Gastrocnemius medialis (tissue), 4 donors: ENCODE measurements at regions of chr14 and their contacts with region 1.

Region 1: GRCh38 chr14:34227834-34228649 is 234.0 kb downstream of the SPTSSA start:
- DNase-seq: peak; percentile 25 to 49
- ATAC-seq: peak; percentile 78 to 94
- H3K4me3 ChIP-seq: peak overlapping the region in 2 of 4 donors; percentile 24
- H3K27ac ChIP-seq: no peak overlapping the region
- H3K4me1 ChIP-seq: peaks cover 11 to 16% of the 10 kb centered on the region in 2 donors
- H3K27me3 ChIP-seq: no peaks in the 10 kb centered on the region
- CTCF ChIP-seq: peak; percentile 66 to 87 (median 85)
- POLR2A ChIP-seq: no peak

Region 2: DNA sequence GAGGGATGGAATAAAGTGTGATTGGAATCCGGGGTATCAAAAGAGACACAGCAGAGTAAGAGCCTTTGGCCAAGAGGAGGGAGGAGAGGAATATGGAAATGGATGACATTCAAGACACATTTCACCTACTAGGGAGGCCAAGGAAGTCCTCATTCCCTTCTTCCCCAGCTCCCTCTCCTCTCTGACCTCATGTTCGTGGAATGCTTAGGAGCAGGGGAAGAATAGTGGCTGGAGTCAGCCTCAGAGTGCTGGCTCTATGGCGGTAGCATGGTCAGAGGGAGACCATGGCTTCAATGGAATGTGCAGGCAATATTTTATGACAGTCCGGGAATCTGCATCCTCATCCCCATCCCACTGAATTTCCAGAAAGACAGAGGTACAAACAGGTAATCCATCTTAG is 473.8 kb before region 1 on chr14:
- in situ Hi-C with region 1: no loop called
- intact Hi-C with region 1: no loop called
- DNase-seq: no peak
- ATAC-seq: no peak
- H3K4me3 ChIP-seq: no peak overlapping the region
- H3K27ac ChIP-seq: no peak overlapping the region
- H3K4me1 ChIP-seq: no peaks in the 10 kb centered on the region
- H3K27me3 ChIP-seq: no peaks in the 10 kb centered on the region
- CTCF ChIP-seq: no peak
- POLR2A ChIP-seq: no peak

Region 3: DNA sequence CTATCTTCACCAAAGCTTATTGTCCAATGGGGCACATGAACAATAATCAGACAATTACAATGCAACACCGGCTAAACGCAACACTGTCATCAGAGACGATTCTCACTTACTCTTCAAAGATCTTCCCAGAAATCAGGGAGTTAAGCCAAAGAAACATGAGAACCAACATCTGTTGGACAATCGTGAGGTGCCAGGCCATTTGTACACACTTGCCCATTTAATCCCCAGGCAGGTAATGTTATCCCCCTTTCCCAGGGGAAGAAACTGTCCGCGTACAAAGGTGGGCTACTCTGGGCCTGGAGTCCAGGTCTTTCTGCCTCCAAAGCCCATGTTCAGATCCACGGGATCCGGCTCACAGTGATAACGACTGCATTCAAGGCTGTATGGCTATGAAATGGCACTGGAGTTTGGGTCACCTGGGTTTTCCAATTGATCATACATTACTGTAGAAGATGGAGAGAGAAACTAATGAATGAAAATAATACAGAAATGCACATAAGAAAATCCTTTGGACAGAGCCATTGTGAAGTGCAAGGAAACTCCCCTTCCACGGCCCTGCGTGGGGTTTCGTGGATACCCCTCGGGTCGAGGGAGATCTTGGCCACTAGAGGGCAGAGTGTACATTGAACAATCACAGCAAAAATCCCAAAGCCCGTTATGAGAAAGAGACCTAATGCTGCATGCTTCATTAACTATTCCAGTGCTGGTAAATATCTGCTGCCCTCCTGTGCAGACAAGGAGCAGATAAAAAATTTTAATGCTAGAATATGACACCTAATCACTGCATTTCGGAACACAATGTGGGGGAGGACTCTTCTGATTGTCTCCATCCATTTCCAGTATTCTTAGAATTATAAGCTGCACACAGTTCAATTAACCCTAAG is 388.6 kb before region 1 on chr14:
- in situ Hi-C with region 1: loop called in 2 of 4 experiments (anchors 5 to 10 kb)
- intact Hi-C with region 1: loop called (anchors 1 kb)
- DNase-seq: peak; percentile 9 to 38
- ATAC-seq: peak; percentile 77 to 92
- H3K4me3 ChIP-seq: no peak overlapping the region
- H3K27ac ChIP-seq: no peak overlapping the region
- H3K4me1 ChIP-seq: peaks cover 3 to 6% of the 10 kb centered on the region in 2 donors
- H3K27me3 ChIP-seq: no peaks in the 10 kb centered on the region
- CTCF ChIP-seq: peak; percentile 74 to 85 (median 79)
- POLR2A ChIP-seq: no peak

Region 4: GRCh38 chr14:33859306-33859705 is 368.7 kb before region 1 on chr14:
- in situ Hi-C with region 1: loop called in 2 of 4 experiments (anchors 10 kb)
- intact Hi-C with region 1: no loop called
- DNase-seq: no peak
- ATAC-seq: no peak
- H3K4me3 ChIP-seq: no peak overlapping the region
- H3K27ac ChIP-seq: no peak overlapping the region
- H3K4me1 ChIP-seq: no peaks in the 10 kb centered on the region
- H3K27me3 ChIP-seq: no peaks in the 10 kb centered on the region
- CTCF ChIP-seq: no peak
- POLR2A ChIP-seq: no peak

Region 5: GRCh38 chr14:33938131-33938949 is 289.7 kb before region 1 on chr14:
- in situ Hi-C with region 1: no loop called
- intact Hi-C with region 1: loop called (anchors 10 kb)
- DNase-seq: peak; percentile 40 to 74
- ATAC-seq: peak; percentile 84 to 92
- H3K4me3 ChIP-seq: peak overlapping the region; percentile 35 to 43 (median 42)
- H3K27ac ChIP-seq: peak overlapping the region; percentile 65 to 76 (median 72)
- H3K4me1 ChIP-seq: peaks cover 25 to 27% of the 10 kb centered on the region in 2 donors
- H3K27me3 ChIP-seq: no peaks in the 10 kb centered on the region
- CTCF ChIP-seq: no peak
- POLR2A ChIP-seq: no peak

Region 6: GRCh38 chr14:33950320-33951182 is 277.5 kb before region 1 on chr14 and contains the start of gene EGLN3:
- in situ Hi-C with region 1: no loop called
- intact Hi-C with region 1: loop called (anchors 5 kb)
- DNase-seq: peak; percentile 78 to 86
- ATAC-seq: peak; percentile 91 to 92
- H3K4me3 ChIP-seq: peak within 1 kb of the TSS; percentile 81 to 91 (median 83)
- H3K27ac ChIP-seq: peak within 1 kb of the TSS; percentile 78 to 88 (median 82)
- H3K4me1 ChIP-seq: peaks cover 11 to 14% of the 10 kb centered on the region in 2 donors
- H3K27me3 ChIP-seq: no peaks in the 10 kb centered on the region
- CTCF ChIP-seq: no peak
- POLR2A ChIP-seq: peak; percentile 96 to 99
- total RNA-seq, gene EGLN3: 9.4 to 15.7 (median 13.5) TPM

Region 7: GRCh38 chr14:34300882-34301734 is 73.1 kb after region 1 on chr14:
- in situ Hi-C with region 1: no loop called
- intact Hi-C with region 1: loop called (anchors 5 kb)
- DNase-seq: no peak
- ATAC-seq: peak in 1 of 2 donors; percentile 51
- H3K4me3 ChIP-seq: no peak overlapping the region
- H3K27ac ChIP-seq: no peak overlapping the region
- H3K4me1 ChIP-seq: peaks cover 0 to 9% of the 10 kb centered on the region in 2 donors
- H3K27me3 ChIP-seq: no peaks in the 10 kb centered on the region
- CTCF ChIP-seq: peak in 4 of 5 experiments; percentile 28 to 63 (median 59)
- POLR2A ChIP-seq: no peak